Posterior cingulate gyrus (tissue), 11 donors: ENCODE measurements at regions of chr6 and their contacts with region 1.

Region 1: DNA sequence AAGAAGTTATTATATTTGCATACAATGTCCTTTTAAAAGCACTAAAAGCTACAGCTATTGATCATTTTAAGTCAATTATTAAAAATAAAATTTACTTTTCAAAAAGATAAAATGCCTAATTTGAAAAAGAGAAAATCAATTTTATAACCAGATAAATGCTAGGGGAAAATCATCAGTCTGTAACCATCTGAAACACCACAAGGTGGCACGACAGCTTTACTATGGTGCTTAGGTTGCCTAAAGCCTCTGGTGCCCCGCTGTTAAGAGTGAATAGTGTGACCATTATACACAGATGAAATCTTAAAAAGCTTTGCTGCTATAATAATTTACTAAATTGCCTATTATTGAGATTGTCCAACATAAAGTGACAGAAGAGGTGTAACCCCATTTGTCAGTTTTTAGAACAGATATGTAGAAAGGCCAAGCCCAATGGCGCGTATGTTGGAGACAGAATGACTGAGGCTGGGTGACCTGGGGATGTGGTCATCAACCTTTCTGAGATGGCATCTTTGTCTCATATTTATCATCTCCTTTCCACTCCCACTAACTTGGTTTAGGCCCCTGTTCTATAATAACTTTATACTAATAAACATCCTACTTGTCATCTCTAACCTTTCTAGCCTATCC is 100.8 kb downstream of the MOXD1 start:
- DNase-seq: peak in 5 of 10 donors; percentile 18 to 82 (median 52)

Region 2: GRCh38 chr6:132161283-132161682 is 139.2 kb before region 1 on chr6:
- intact Hi-C with region 1: no loop called
- DNase-seq: no peak

Region 3: DNA sequence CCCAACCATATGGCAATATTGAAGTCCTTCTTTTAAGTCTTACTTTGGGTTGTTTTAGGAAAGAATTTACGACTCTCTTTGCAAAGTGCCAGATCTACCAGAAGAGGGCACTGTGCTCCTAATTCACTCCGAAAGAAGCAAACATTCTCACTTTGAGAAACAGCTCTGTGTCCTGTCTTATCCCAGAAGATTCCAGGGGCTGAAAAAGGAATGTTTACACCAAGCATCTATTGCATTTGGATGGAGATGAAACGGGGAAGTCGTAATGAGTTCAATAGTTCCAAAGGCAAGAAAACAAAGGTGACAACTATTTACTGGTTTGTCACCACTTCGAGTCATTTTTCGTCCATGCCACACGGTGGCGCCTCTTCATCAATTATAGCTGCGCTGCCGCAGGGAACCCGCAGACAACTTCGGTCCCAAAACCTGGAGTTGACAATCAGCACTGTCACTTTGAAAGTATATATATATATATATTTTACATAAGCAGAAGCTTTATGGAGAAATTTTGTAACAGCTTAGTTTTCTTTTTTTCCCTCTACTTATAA is 20.8 kb before region 1 on chr6:
- intact Hi-C with region 1: loop called (anchors 1 kb)
- DNase-seq: peak; percentile 60 to 97 (median 80)

Region 4: GRCh38 chr6:132483779-132484679 is 183.6 kb after region 1 on chr6:
- intact Hi-C with region 1: loop called (anchors 1 kb)
- DNase-seq: peak in 1 of 10 donors; percentile 29